CD4-positive, alpha-beta T cell (primary cell): ENCODE measurements at regions of chr9 and their contacts with region 1.

Region 1: GRCh38 chr9:127586537-127586936 is 25.5 kb upstream of the STXBP1 start:
- DNase-seq: peak; percentile 33 to 82 (median 52)
- ATAC-seq: peak; percentile 43
- H3K4me3 ChIP-seq: no peak overlapping the region
- H3K4me3 Mint-ChIP-seq: no peak overlapping the region
- H3K27ac ChIP-seq: no peak overlapping the region
- H3K27ac Mint-ChIP-seq: no peak overlapping the region
- H3K4me1 ChIP-seq: peaks cover 4% of the 10 kb centered on the region
- H3K4me1 Mint-ChIP-seq: no peaks in the 10 kb centered on the region
- H3K27me3 ChIP-seq: no peaks in the 10 kb centered on the region
- H3K27me3 Mint-ChIP-seq: peaks cover 20% of the 10 kb centered on the region
- CTCF ChIP-seq: peak; percentile 65

Region 2: GRCh38 chr9:126939821-126940221 is 646.7 kb before region 1 on chr9:
- CTCF ChIA-PET with region 1: no interaction called
- POLR2A ChIA-PET with region 1: no interaction called
- intact Hi-C with region 1: loop called (anchors 2 to 10 kb)
- DNase-seq: no peak
- ATAC-seq: no peak
- H3K4me3 ChIP-seq: no peak overlapping the region
- H3K4me3 Mint-ChIP-seq: no peak overlapping the region
- H3K27ac ChIP-seq: no peak overlapping the region
- H3K27ac Mint-ChIP-seq: no peak overlapping the region
- H3K4me1 ChIP-seq: peaks cover 2% of the 10 kb centered on the region
- H3K4me1 Mint-ChIP-seq: peaks cover 6% of the 10 kb centered on the region
- H3K27me3 ChIP-seq: peaks cover 3 to 4% of the 10 kb centered on the region in 2 experiments
- H3K27me3 Mint-ChIP-seq: peaks cover 13% of the 10 kb centered on the region
- CTCF ChIP-seq: no peak

Region 3: GRCh38 chr9:126947529-126947928 is 639.0 kb before region 1 on chr9:
- CTCF ChIA-PET with region 1: no interaction called
- POLR2A ChIA-PET with region 1: no interaction called
- intact Hi-C with region 1: loop called in 1 of 2 experiments (anchors 10 kb)
- DNase-seq: peak in 3 of 14 experiments; percentile 15 to 27 (median 25)
- ATAC-seq: peak; percentile 32
- H3K4me3 ChIP-seq: no peak overlapping the region
- H3K4me3 Mint-ChIP-seq: no peak overlapping the region
- H3K27ac ChIP-seq: no peak overlapping the region
- H3K27ac Mint-ChIP-seq: no peak overlapping the region
- H3K4me1 ChIP-seq: no peaks in the 10 kb centered on the region
- H3K4me1 Mint-ChIP-seq: no peaks in the 10 kb centered on the region
- H3K27me3 ChIP-seq: peaks cover 0 to 3% of the 10 kb centered on the region in 2 experiments
- H3K27me3 Mint-ChIP-seq: peaks cover 18% of the 10 kb centered on the region
- CTCF ChIP-seq: no peak

Region 4: DNA sequence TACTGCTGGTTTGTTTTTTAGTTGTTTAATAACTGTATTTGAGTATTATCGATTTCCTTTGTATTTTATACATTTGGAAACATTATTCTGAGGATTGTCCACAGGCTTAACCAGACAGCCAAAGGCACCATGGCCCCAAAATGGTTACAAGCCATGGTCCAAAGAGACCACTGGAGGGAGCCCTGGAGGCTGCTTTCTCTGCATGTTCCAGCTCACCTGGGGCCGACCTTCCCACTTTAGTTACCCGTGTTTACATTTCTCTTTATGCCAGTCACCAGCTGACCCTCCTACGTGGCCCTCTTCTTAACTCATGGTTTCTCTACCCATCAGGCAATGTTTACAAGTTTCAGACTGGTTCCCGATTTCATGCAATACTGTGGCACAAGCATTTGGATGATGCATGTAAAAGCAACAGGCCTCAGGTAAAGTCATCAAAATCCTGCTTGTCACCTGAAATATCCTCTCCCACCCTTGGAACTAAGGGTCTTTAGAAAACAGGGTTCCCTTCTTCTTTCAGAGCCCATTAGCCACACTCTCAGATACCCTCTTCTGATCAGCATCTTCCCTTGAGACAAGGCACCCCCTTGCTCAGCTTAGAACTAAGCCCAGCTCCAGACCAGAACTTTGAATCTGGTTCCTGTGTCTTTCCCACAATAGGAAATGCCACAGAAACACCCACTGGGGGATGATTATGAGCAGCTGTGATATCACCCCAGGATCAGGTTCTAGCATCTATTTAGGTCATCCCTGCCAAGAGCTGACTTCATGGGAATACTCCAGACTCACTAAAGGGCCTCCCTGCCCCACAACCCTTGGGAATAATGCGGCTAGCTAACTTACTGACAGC is 371.9 kb before region 1 on chr9:
- CTCF ChIA-PET with region 1: no interaction called
- POLR2A ChIA-PET with region 1: no interaction called
- intact Hi-C with region 1: loop called in 1 of 2 experiments (anchors 1 kb)
- DNase-seq: peak; percentile 40 to 78 (median 54)
- ATAC-seq: peak; percentile 92
- H3K4me3 ChIP-seq: no peak overlapping the region
- H3K4me3 Mint-ChIP-seq: no peak overlapping the region
- H3K27ac ChIP-seq: no peak overlapping the region
- H3K27ac Mint-ChIP-seq: no peak overlapping the region
- H3K4me1 ChIP-seq: no peaks in the 10 kb centered on the region
- H3K4me1 Mint-ChIP-seq: peaks cover 5% of the 10 kb centered on the region
- H3K27me3 ChIP-seq: no peaks in the 10 kb centered on the region
- H3K27me3 Mint-ChIP-seq: peaks cover 16% of the 10 kb centered on the region
- CTCF ChIP-seq: peak; percentile 83

Region 5: DNA sequence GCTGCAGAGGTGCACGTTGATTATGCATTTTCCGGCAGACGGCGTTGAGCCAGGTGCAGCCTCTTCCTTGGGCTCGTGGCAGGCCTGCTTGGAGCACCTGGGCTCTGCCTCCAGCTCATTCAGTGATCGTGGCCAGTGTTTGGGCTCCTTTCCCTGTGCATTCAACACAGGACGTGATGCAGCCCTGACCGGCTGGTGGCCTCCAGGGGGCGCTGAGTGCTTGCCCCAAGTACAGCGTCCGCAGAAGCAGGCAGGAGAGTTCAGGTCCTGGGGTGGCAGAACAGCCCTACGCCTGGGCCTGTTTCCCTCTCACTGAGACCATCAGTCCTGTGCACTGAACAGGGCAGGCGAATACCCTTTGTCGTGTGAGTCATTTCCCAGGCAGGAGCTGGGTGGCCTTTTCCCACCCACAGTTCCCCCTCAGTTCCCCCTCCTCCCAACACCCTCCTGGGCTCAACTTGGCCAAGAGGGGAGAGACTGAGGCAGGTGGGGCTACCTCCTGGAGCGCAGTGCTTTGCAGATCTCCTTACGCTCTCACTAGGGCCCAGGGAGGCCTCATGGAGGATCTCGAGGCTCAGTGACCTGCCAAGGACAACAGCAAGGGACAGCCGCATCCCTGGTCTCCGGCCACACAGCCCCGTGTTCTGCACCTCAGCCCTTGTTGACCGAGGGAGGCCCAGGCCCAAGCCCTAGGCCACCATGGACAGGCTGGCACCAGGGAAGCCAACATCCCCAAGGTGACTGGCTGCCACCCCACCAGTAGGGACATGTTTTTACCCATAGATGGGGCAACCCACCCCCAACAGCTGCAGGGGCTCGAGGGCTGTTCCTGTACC is 82.4 kb before region 1 on chr9:
- CTCF ChIA-PET with region 1: interaction called, 3 read pairs
- POLR2A ChIA-PET with region 1: no interaction called
- intact Hi-C with region 1: loop called (anchors 1 kb)
- DNase-seq: peak; percentile 70 to 89 (median 78)
- ATAC-seq: peak; percentile 93
- H3K4me3 ChIP-seq: no peak overlapping the region
- H3K4me3 Mint-ChIP-seq: no peak overlapping the region
- H3K27ac ChIP-seq: no peak overlapping the region
- H3K27ac Mint-ChIP-seq: no peak overlapping the region
- H3K4me1 ChIP-seq: peaks cover 3% of the 10 kb centered on the region
- H3K4me1 Mint-ChIP-seq: peaks cover 4% of the 10 kb centered on the region
- H3K27me3 ChIP-seq: no peaks in the 10 kb centered on the region
- H3K27me3 Mint-ChIP-seq: no peaks in the 10 kb centered on the region
- CTCF ChIP-seq: peak; percentile 88

Region 6: GRCh38 chr9:127869310-127870152 is 283.0 kb after region 1 on chr9:
- CTCF ChIA-PET with region 1: interaction called, 3 read pairs
- POLR2A ChIA-PET with region 1: no interaction called
- intact Hi-C with region 1: loop called in 1 of 2 experiments (anchors 1 kb)
- DNase-seq: peak; percentile 52 to 88 (median 71)
- ATAC-seq: peak; percentile 62
- H3K4me3 ChIP-seq: no peak overlapping the region
- H3K4me3 Mint-ChIP-seq: no peak overlapping the region
- H3K27ac ChIP-seq: no peak overlapping the region
- H3K27ac Mint-ChIP-seq: no peak overlapping the region
- H3K4me1 ChIP-seq: peaks cover 23% of the 10 kb centered on the region
- H3K4me1 Mint-ChIP-seq: peaks cover 19% of the 10 kb centered on the region
- H3K27me3 ChIP-seq: no peaks in the 10 kb centered on the region
- H3K27me3 Mint-ChIP-seq: no peaks in the 10 kb centered on the region
- CTCF ChIP-seq: peak; percentile 99